ENCODE measurements at regions of chr6 and their contacts with region 1.

Region 1: GRCh38 chr6:87589693-87590549 is at the starts of genes ORC3 and RARS2:
- DNase-seq: peak; percentile 99
- total RNA-seq, gene ORC3: 23.0 TPM
- total RNA-seq, gene RARS2: 23.6 TPM

Region 2: DNA sequence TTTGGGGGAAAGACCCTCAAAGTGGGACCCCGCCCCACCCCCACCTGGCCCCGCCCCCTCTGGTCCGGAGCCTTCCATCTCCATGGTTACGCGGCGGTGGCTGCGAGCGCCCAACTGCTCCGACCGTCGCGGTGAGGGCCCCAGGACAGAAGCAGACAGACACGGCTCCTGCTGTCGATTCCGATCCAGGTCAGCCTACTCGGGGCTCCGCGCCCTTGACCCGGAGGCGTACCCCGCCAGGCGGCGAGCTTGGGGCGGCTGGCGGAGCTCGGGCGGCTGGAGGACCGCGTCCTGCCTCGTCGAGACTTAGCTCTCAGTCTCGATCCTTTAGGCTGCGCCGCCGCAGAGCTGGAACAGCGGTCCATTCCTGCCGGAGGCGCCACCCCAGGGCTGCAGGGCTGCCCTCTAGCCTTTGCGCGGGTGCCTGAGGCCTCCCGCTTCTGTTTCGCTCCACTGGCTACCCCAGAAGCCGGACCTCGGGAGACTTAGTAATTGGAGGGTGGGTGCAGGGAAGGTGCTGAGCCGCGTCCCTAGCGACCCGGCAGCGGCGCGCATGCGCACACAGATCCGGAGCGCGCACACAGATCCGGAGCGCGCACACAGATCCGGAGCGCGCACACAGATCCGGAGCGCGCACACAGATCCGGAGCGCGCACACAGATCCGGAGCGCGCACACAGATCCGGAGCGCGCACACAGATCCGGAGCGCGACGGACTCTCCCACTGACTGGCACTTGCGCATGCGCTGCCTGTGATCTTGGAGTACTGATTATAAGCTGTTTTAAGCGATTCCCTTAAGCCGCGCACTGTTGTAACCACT is 181.8 kb before region 1 on chr6 and contains the start of gene CFAP206:
- intact Hi-C with region 1: loop called (anchors 5 kb)
- DNase-seq: peak; percentile 89
- total RNA-seq, gene CFAP206: not detected